T-cell (primary cell): ENCODE measurements at regions of chr9 and their contacts with region 1.

Region 1: GRCh38 chr9:4315582-4316215 is 15.8 kb upstream of the GLIS3 start:
- DNase-seq: peak; percentile 16 to 83 (median 61)
- ATAC-seq: peak; percentile 83 to 94 (median 88)
- H3K4me3 ChIP-seq: no peak overlapping the region
- H3K4me3 Mint-ChIP-seq: no peak overlapping the region
- H3K27ac ChIP-seq: no peak overlapping the region
- H3K27ac Mint-ChIP-seq: no peak overlapping the region
- H3K4me1 ChIP-seq: no peaks in the 10 kb centered on the region
- H3K4me1 Mint-ChIP-seq: peaks cover 0 to 13% (median 4%) of the 10 kb centered on the region in 3 donors
- H3K27me3 ChIP-seq: peaks cover 0 to 2% of the 10 kb centered on the region in 2 experiments
- H3K27me3 Mint-ChIP-seq: peaks cover 6 to 11% of the 10 kb centered on the region in 2 donors

Region 2: GRCh38 chr9:4066120-4066519 is 249.6 kb before region 1 on chr9:
- CTCF ChIA-PET with region 1: no interaction called
- POLR2A ChIA-PET with region 1: no interaction called
- DNase-seq: no peak
- ATAC-seq: no peak
- H3K4me3 ChIP-seq: no peak overlapping the region
- H3K4me3 Mint-ChIP-seq: no peak overlapping the region
- H3K27ac ChIP-seq: no peak overlapping the region
- H3K27ac Mint-ChIP-seq: no peak overlapping the region
- H3K4me1 ChIP-seq: no peaks in the 10 kb centered on the region
- H3K4me1 Mint-ChIP-seq: peaks cover 0 to 2% (median 0%) of the 10 kb centered on the region in 3 donors
- H3K27me3 ChIP-seq: no peaks in the 10 kb centered on the region
- H3K27me3 Mint-ChIP-seq: peaks cover 0 to 4% of the 10 kb centered on the region in 2 donors

Region 3: GRCh38 chr9:4339357-4339756 is 23.7 kb after region 1 on chr9:
- CTCF ChIA-PET with region 1: interaction called, 6 to 33 read pairs
- POLR2A ChIA-PET with region 1: no interaction called
- DNase-seq: peak; percentile 51 to 84 (median 75)
- ATAC-seq: peak; percentile 73 to 90 (median 86)
- H3K4me3 ChIP-seq: no peak overlapping the region
- H3K4me3 Mint-ChIP-seq: peak overlapping the region in 2 of 3 donors; percentile 37 to 40
- H3K27ac ChIP-seq: no peak overlapping the region
- H3K27ac Mint-ChIP-seq: peak overlapping the region; percentile 69 to 71
- H3K4me1 ChIP-seq: peaks cover 0 to 3% of the 10 kb centered on the region in 2 experiments
- H3K4me1 Mint-ChIP-seq: peaks cover 6 to 7% (median 7%) of the 10 kb centered on the region in 3 donors
- H3K27me3 ChIP-seq: no peaks in the 10 kb centered on the region
- H3K27me3 Mint-ChIP-seq: peaks cover 1 to 3% of the 10 kb centered on the region in 2 donors

Region 4: DNA sequence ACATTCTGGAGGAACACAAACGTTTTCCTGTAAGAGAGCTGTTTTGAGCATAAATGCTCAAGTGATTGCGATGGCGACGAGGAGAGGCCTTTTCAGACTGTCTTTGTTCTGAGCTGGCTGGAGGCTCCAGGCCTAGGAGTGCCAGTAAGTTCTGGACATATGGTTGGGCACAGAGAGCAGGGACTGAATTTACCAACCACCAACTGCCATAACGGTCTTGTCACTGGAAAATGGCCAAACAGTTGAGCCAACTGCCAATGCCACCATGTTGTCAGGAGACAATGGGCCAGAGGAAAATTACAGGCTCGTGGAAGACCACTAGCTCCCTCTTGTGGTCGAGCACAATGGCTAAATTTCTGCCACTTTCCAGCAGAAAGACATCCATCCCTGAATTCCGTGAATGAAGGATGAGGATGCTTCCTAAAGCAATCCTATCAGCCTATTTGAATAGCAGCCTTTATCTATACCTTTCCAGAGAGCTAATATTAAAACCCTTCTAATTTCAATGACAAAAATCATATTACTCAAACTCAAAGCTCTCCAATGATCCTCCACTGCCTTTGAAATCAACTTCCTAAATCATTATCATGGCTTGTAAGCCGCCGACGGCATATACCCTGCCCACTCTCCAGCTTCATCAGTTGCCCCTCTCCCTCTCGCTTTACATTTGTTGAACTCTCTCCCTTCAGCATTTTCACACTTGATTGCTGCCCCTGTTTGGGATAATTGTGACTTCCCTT is 51.1 kb after region 1 on chr9:
- CTCF ChIA-PET with region 1: interaction called, 6 to 14 read pairs
- POLR2A ChIA-PET with region 1: no interaction called
- DNase-seq: peak in 12 of 35 experiments; percentile 4 to 57 (median 12)
- ATAC-seq: no peak
- H3K4me3 ChIP-seq: no peak overlapping the region
- H3K4me3 Mint-ChIP-seq: no peak overlapping the region
- H3K27ac ChIP-seq: no peak overlapping the region
- H3K27ac Mint-ChIP-seq: no peak overlapping the region
- H3K4me1 ChIP-seq: no peaks in the 10 kb centered on the region
- H3K4me1 Mint-ChIP-seq: no peaks in the 10 kb centered on the region
- H3K27me3 ChIP-seq: no peaks in the 10 kb centered on the region
- H3K27me3 Mint-ChIP-seq: peaks cover 2 to 4% of the 10 kb centered on the region in 2 donors

Region 5: DNA sequence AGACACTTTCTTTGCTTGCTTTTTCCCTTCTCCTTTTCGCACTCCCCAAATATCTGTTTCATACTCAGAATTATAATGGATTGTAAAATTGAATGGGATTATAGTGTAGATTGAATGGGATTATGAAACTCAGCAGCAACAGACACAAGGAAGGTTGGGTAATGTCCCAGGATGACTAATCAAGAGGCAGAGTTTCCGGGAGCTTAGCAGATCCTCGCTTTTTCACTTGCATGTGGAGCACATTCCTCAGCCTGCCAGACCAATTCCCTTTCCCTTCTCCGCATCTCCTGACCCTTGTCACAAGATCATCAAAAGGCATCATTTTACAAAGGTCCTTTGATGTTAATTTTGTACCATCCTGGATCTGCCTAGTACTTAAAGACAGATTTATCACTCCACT is 119.5 kb after region 1 on chr9:
- CTCF ChIA-PET with region 1: no interaction called
- POLR2A ChIA-PET with region 1: interaction called in 1 of 2 experiments, 10 read pairs
- DNase-seq: no peak
- ATAC-seq: no peak
- H3K4me3 ChIP-seq: no peak overlapping the region
- H3K4me3 Mint-ChIP-seq: no peak overlapping the region
- H3K27ac ChIP-seq: no peak overlapping the region
- H3K27ac Mint-ChIP-seq: no peak overlapping the region
- H3K4me1 ChIP-seq: no peaks in the 10 kb centered on the region
- H3K4me1 Mint-ChIP-seq: peaks cover 0 to 4% (median 2%) of the 10 kb centered on the region in 3 donors
- H3K27me3 ChIP-seq: no peaks in the 10 kb centered on the region
- H3K27me3 Mint-ChIP-seq: peaks cover 2 to 4% of the 10 kb centered on the region in 2 donors

Region 6: GRCh38 chr9:4657426-4658159 is 341.9 kb after region 1 on chr9:
- CTCF ChIA-PET with region 1: no interaction called
- POLR2A ChIA-PET with region 1: no interaction called
- DNase-seq: no peak
- ATAC-seq: no peak
- H3K4me3 ChIP-seq: no peak overlapping the region
- H3K4me3 Mint-ChIP-seq: no peak overlapping the region
- H3K27ac ChIP-seq: no peak overlapping the region
- H3K27ac Mint-ChIP-seq: no peak overlapping the region
- H3K4me1 ChIP-seq: peaks cover 2 to 20% of the 10 kb centered on the region in 2 experiments
- H3K4me1 Mint-ChIP-seq: peaks cover 14 to 27% (median 15%) of the 10 kb centered on the region in 3 donors
- H3K27me3 ChIP-seq: no peaks in the 10 kb centered on the region
- H3K27me3 Mint-ChIP-seq: no peaks in the 10 kb centered on the region

Region 7: GRCh38 chr9:5375091-5375490 is 1059.4 kb after region 1 on chr9:
- CTCF ChIA-PET with region 1: no interaction called
- POLR2A ChIA-PET with region 1: no interaction called
- DNase-seq: no peak
- ATAC-seq: no peak
- H3K4me3 ChIP-seq: no peak overlapping the region
- H3K4me3 Mint-ChIP-seq: peak overlapping the region in 1 of 3 donors; percentile 36
- H3K27ac ChIP-seq: no peak overlapping the region
- H3K27ac Mint-ChIP-seq: no peak overlapping the region
- H3K4me1 ChIP-seq: peaks cover 3 to 5% of the 10 kb centered on the region in 2 experiments
- H3K4me1 Mint-ChIP-seq: peaks cover 25 to 51% (median 30%) of the 10 kb centered on the region in 3 donors
- H3K27me3 ChIP-seq: no peaks in the 10 kb centered on the region
- H3K27me3 Mint-ChIP-seq: no peaks in the 10 kb centered on the region